Panc1 (cell line): ENCODE measurements at regions of chr7 and their contacts with region 1.

Region 1: DNA sequence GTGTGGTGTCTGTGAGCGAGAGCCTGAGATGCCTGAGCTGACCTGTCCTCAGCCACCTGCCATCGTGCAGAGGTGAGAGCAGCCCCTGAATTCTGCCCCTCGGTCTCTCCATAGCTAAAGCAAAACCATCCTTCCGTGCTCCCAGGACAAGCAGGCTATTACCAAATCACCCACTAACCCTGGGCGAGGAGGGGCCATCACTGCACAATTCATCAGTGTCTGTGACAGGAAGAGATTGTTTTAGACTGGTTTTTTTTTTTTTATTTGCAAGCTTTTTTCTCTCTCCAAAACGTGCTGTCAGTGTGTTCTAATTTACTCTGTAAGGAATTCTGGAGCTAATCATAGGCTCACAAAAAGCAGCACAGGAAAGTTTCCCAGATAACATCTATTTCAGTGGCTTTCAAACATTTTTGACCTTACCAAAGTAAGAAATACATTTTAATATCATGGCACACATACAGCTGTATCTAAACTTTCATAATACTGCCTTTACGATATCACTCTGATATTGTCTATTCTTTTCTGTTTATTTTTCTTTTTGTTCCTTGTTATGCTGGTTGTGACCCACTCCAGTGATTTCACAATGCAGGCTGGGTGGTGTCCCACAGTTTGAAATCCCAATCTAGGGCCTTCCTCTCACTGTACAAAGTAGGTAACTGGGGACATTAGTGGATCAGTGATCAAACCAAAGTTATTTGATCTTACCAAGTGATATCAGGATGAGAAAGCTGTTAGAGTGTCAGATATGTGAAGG is 62.8 kb downstream of the EGFR start:
- DNase-seq: no peak
- ATAC-seq: no peak
- H3K4me3 ChIP-seq: peak overlapping the region in 1 of 2 experiments; percentile 4; a peak in 1 of 4 replicates
- H3K27ac ChIP-seq: peak overlapping the region; percentile 100
- H3K4me1 ChIP-seq: peaks cover 96% of the 10 kb centered on the region
- H3K27me3 ChIP-seq: no peaks in the 10 kb centered on the region
- CTCF ChIP-seq: no peak

Region 2: GRCh38 chr7:55099066-55099820 is 17.6 kb after region 1 on chr7:
- CTCF ChIA-PET with region 1: no interaction called
- POLR2A ChIA-PET with region 1: interaction called, 4 read pairs
- in situ Hi-C with region 1: no loop called
- intact Hi-C with region 1: loop called (anchors 2 kb)
- DNase-seq: no peak
- ATAC-seq: no peak
- H3K4me3 ChIP-seq: no peak overlapping the region
- H3K27ac ChIP-seq: peak overlapping the region; percentile 64
- H3K4me1 ChIP-seq: peaks cover 72% of the 10 kb centered on the region
- H3K27me3 ChIP-seq: no peaks in the 10 kb centered on the region
- CTCF ChIP-seq: no peak

Region 3: GRCh38 chr7:55160539-55160938 is 78.9 kb after region 1 on chr7:
- CTCF ChIA-PET with region 1: no interaction called
- POLR2A ChIA-PET with region 1: no interaction called
- in situ Hi-C with region 1: no loop called
- intact Hi-C with region 1: no loop called
- DNase-seq: no peak
- ATAC-seq: no peak
- H3K4me3 ChIP-seq: no peak overlapping the region
- H3K27ac ChIP-seq: no peak overlapping the region
- H3K4me1 ChIP-seq: no peaks in the 10 kb centered on the region
- H3K27me3 ChIP-seq: no peaks in the 10 kb centered on the region
- CTCF ChIP-seq: no peak